CD14-positive monocyte (primary cell): ENCODE measurements at regions of chr7 and their contacts with region 1.

Region 1: DNA sequence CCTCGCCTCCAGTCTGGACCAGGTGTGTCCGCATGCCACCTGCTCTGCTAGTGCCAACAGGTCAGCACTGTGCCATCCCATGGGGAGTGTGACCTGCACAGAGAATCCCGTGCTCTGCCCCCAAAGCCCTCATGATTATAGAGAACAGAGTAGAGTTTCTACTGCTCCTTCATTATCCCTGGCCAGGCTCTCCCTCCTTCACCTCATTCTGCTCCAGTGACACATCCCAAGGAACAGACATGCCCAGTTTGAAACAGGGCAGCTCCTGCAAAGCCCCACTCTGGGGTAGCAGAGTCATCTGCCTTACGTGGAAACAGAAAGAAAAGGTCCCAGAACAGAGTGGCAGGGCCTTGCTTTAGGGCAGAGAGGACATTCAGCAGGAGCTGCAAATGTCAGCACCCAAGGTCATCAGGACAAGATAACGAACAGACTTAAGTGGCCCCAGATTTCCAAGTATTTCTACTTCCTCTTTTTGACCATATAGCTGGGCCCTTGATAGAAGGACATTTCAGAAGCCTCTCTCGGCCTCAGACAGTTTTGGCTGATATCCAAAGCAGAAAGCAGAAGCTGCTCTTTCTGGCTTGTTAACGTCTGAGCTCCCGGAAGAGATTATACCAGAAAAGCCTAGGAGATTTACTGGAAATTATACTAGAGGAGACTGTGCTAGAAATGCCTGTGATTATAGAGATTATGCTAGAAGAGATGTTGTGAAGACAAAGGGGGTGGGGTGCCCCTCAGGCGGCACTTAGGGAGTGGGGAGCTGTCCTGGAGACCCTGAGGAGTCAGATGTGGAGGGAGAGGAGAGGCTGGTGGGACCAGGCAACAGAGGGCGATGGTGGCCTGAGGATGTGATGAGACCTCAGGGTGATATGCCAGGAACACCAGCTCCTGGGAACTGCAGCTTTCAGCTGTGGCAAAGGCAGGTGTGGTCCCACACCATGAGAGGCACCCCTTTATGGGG is 12.6 kb downstream of the TMEM176B start:
- DNase-seq: peak; percentile 90 to 95 (median 94)
- H3K4me3 ChIP-seq: peak overlapping the region in 1 of 3 experiments; percentile 52
- H3K4me3 Mint-ChIP-seq: peak overlapping the region; percentile 59 to 87
- H3K27ac ChIP-seq: peak overlapping the region; percentile 73 to 96
- H3K27ac Mint-ChIP-seq: peak overlapping the region; percentile 93 to 97 (median 96)
- H3K4me1 ChIP-seq: peaks cover 59 to 77% of the 10 kb centered on the region in 2 donors
- H3K4me1 Mint-ChIP-seq: peaks cover 86% of the 10 kb centered on the region
- H3K27me3 ChIP-seq: no peaks in the 10 kb centered on the region
- H3K27me3 Mint-ChIP-seq: peaks cover 0 to 2% (median 1%) of the 10 kb centered on the region in 3 donors
- CTCF ChIP-seq: no peak

Region 2: DNA sequence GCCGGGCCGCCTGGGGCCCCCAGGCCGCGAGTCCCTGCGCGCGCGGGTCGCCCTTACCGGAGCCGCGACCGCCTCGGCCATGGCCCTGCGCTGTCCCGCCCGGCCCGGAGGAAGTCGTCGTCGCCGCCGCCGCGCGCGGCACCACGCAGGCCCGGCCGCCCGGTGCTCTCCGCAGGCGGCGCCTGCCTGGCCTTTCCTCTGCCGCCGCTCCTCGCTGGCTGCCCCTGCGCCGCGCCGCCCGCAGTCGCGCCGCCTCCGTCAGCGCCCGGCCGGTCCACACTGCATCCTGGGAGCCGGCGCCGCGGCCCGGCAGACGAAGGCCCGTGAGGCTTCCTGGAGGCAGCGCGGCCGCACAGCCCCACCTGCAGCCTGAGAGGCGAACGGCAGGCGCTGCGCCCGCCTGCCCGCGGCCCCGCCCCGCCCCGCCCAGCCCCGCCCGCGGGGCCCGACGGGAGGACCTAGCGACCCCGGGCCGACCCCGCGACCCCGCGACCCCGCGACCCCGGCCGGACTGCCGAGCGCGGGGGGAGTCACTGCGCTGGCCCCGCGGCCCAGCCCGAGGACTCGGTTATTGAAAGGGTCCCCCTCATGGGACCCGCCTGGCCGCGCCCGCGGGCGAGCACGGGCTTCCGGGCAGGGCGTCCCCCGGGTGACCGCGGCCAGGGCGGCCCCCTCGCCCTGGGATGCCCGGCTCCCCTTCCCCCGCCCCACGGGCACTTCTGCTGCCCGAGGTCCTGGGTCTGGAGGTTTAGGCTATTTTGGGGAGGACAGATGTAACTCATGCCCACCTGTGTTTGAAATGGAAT is 1289.9 kb before region 1 on chr7 and contains the start of gene ZNF746:
- intact Hi-C with region 1: loop called in 1 of 2 experiments (anchors 10 kb)
- DNase-seq: peak; percentile 72 to 79 (median 78)
- H3K4me3 ChIP-seq: peak within 1 kb of the TSS; percentile 72 to 83 (median 77)
- H3K4me3 Mint-ChIP-seq: peak within 1 kb of the TSS; percentile 96 to 97
- H3K27ac ChIP-seq: peak within 1 kb of the TSS; percentile 25 to 74
- H3K27ac Mint-ChIP-seq: peak within 1 kb of the TSS; percentile 75 to 93 (median 91)
- H3K4me1 ChIP-seq: peaks cover 33 to 37% of the 10 kb centered on the region in 2 donors
- H3K4me1 Mint-ChIP-seq: peaks cover 32% of the 10 kb centered on the region
- H3K27me3 ChIP-seq: no peaks in the 10 kb centered on the region
- H3K27me3 Mint-ChIP-seq: peaks cover 3 to 14% (median 5%) of the 10 kb centered on the region in 3 donors
- CTCF ChIP-seq: peak; percentile 49
- polyA plus RNA-seq, gene ZNF746: 7.5 to 25.6 (median 8.1) TPM

Region 3: DNA sequence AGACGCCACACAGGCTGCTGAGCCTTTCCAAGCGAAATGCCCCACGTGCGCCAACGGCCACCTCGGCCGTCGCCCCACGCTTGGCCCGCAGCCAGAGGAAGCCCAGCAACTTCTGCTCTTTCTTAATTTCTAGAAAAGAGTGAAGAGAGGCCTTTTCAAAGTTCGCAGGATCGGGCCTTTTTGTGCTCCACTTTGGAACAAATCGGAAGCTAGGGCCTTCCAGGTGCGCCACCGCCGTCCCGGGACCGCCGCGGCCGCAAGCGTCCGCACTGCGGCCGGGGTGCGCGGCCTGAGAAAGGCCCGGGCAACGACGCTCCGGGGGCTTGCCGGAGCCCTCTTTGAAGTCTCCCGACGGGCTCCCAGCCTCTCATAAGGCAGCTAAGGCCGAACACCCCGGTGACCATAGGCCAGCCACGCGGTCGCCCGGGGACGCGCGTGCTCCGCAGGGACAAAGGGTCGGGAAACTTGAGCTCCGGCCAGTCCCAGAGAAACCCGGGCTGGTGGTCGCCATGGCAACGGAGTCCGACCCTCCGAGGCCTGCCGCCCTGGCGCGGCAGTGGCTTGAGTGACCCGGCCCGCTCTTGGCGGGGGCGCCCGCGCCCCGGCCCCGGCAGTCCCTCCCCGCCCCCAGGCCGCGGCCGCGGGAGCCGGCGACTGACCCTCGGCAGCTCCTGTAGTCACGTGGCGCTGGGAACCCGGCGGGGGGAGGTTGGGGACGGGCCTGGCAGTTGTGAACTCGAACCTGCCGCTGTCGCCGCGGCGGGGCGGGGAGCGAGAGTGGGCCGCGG is 419.3 kb before region 1 on chr7 and contains the start of gene REPIN1:
- intact Hi-C with region 1: loop called in 1 of 2 experiments (anchors 10 kb)
- DNase-seq: peak; percentile 66 to 85 (median 72)
- H3K4me3 ChIP-seq: peak within 1 kb of the TSS; percentile 58 to 91 (median 73)
- H3K4me3 Mint-ChIP-seq: peak within 1 kb of the TSS; percentile 95 to 97
- H3K27ac ChIP-seq: peak within 1 kb of the TSS; percentile 83 to 95
- H3K27ac Mint-ChIP-seq: peak within 1 kb of the TSS; percentile 91 to 98 (median 95)
- H3K4me1 ChIP-seq: peaks cover 61 to 75% of the 10 kb centered on the region in 2 donors
- H3K4me1 Mint-ChIP-seq: peaks cover 64% of the 10 kb centered on the region
- H3K27me3 ChIP-seq: no peaks in the 10 kb centered on the region
- H3K27me3 Mint-ChIP-seq: no peaks in the 10 kb centered on the region
- CTCF ChIP-seq: no peak
- polyA plus RNA-seq, gene REPIN1: 32.7 to 42.9 (median 39.0) TPM

Region 4: DNA sequence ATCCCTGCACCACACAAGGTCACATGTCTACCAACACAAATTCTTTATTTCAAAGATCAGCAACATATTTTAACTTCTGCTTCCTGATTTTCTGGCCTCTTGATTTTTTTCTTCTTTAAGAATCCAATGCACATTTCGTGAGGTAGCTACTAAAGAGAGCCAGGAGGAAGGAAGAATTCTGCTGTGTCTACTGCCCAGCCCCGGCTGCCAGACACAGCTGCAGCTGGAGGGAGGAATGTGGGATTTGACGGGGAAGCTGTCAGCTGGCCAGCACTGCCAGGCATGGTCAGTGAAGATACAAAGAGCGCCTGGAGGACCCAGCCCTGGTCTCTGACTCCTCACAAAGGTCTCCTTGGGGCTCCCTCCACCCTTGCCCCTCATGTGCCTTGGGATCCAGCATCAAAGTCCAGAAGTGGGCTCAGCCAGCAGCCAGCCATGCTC is 57.8 kb after region 1 on chr7:
- intact Hi-C with region 1: no loop called
- DNase-seq: no peak
- H3K4me3 ChIP-seq: no peak overlapping the region
- H3K4me3 Mint-ChIP-seq: no peak overlapping the region
- H3K27ac ChIP-seq: no peak overlapping the region
- H3K27ac Mint-ChIP-seq: peak overlapping the region in 4 of 7 donors; percentile 19 to 58 (median 40)
- H3K4me1 ChIP-seq: peaks cover 4 to 8% of the 10 kb centered on the region in 2 donors
- H3K4me1 Mint-ChIP-seq: peaks cover 12% of the 10 kb centered on the region
- H3K27me3 ChIP-seq: no peaks in the 10 kb centered on the region
- H3K27me3 Mint-ChIP-seq: peaks cover 0 to 6% (median 5%) of the 10 kb centered on the region in 3 donors
- CTCF ChIP-seq: no peak

Region 5: DNA sequence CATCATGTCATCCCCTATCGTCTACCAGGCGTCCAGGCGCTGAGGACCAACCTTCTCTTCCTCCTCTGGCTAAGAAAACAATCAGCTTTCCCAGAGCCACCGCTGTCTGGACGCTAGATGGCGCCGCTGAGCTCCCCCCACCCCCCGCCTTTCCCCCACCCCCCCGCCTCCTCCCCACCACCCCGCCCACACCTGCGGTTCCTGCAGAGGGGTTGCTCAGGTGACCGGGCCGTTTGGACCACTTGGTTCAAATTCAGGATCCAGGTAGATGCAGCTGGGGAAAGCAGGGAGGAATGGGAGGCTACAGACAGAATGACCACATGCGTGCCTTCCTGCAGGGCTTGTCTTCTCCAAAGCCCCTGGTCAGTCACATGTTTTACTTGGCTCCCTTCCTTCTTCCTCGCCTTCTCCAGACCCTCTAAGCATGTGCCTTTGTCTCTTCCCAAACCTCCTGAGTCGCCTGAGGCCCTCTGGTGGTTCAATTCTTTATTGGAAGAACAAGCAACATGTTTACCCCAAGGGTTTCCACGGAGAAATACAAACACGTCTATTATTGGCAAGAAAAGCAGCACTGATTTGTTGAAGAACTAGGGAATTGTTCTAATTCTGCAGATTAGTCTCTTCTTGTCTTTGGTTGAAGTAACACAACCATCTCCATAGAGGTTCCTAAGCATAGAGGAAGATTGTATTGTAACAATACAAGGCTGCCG is 89.4 kb after region 1 on chr7:
- intact Hi-C with region 1: loop called in 1 of 2 experiments (anchors 10 kb)
- DNase-seq: peak; percentile 37 to 54 (median 39)
- H3K4me3 ChIP-seq: no peak overlapping the region
- H3K4me3 Mint-ChIP-seq: peak overlapping the region in 1 of 2 donors; percentile 50
- H3K27ac ChIP-seq: no peak overlapping the region
- H3K27ac Mint-ChIP-seq: no peak overlapping the region
- H3K4me1 ChIP-seq: peaks cover 0 to 3% of the 10 kb centered on the region in 2 donors
- H3K4me1 Mint-ChIP-seq: peaks cover 12% of the 10 kb centered on the region
- H3K27me3 ChIP-seq: peaks cover 0 to 5% of the 10 kb centered on the region in 2 donors
- H3K27me3 Mint-ChIP-seq: peaks cover 5 to 10% (median 8%) of the 10 kb centered on the region in 3 donors
- CTCF ChIP-seq: peak; percentile 53

Region 6: GRCh38 chr7:150988230-150989226 is 200.9 kb after region 1 on chr7:
- intact Hi-C with region 1: loop called in 1 of 2 experiments (anchors 10 kb)
- DNase-seq: peak; percentile 18 to 56 (median 20)
- H3K4me3 ChIP-seq: peak overlapping the region in 1 of 3 experiments; percentile 31
- H3K4me3 Mint-ChIP-seq: peak overlapping the region; percentile 55 to 81
- H3K27ac ChIP-seq: no peak overlapping the region
- H3K27ac Mint-ChIP-seq: peak overlapping the region in 2 of 7 donors; percentile 26 to 37
- H3K4me1 ChIP-seq: peaks cover 11 to 15% of the 10 kb centered on the region in 2 donors
- H3K4me1 Mint-ChIP-seq: peaks cover 26% of the 10 kb centered on the region
- H3K27me3 ChIP-seq: peaks cover 0 to 31% of the 10 kb centered on the region in 2 donors
- H3K27me3 Mint-ChIP-seq: peaks cover 30 to 58% (median 37%) of the 10 kb centered on the region in 3 donors
- CTCF ChIP-seq: peak; percentile 86

Region 7: DNA sequence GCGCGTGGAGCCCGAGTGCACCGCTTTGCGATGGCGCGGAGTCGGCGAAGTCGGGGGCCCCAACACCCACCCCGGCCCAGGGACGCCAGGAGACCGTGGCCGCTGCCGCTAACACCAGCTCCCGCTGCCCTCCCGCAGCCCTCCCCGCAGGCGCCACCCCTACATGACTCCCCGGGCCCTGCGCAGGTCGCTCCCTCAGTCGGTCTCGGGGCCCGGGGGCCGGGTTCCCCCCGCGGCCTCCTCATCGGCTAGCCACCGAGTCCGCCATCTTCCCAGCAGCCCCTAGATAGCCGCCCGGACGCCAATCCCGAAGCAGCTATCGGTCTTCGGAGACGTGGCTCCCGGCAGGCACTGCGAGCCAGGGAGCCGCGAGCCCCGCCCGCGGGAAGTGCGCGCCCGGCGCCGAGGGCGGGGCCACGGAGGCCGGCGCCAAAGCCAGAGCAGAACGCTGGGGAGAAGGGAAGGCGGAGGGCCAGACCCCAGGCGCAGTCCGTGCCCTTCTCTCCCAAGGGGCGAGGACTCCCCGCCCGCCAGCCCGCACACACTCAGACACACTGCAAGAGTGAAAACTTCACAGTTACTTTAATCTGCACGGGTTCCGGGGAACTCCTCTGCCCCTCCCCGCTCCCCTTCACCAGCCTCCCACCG is 293.0 kb after region 1 on chr7 and contains the start of gene FASTK:
- intact Hi-C with region 1: loop called in 1 of 2 experiments (anchors 10 kb)
- DNase-seq: peak; percentile 77 to 86 (median 83)
- H3K4me3 ChIP-seq: peak within 1 kb of the TSS; percentile 88 to 92 (median 89)
- H3K4me3 Mint-ChIP-seq: peak within 1 kb of the TSS; percentile 83 to 89
- H3K27ac ChIP-seq: peak within 1 kb of the TSS; percentile 52 to 83
- H3K27ac Mint-ChIP-seq: peak within 1 kb of the TSS; percentile 73 to 92 (median 84)
- H3K4me1 ChIP-seq: peaks cover 41 to 56% of the 10 kb centered on the region in 2 donors
- H3K4me1 Mint-ChIP-seq: peaks cover 40% of the 10 kb centered on the region
- H3K27me3 ChIP-seq: no peaks in the 10 kb centered on the region
- H3K27me3 Mint-ChIP-seq: peaks cover 0 to 1% (median 1%) of the 10 kb centered on the region in 3 donors
- CTCF ChIP-seq: no peak
- polyA plus RNA-seq, gene FASTK: 34.7 to 110 (median 38.6) TPM